HepG2 (cell line): ENCODE measurements at regions of chr2 and their contacts with region 1.

Region 1: GRCh38 chr2:85728883-85729824 is 24.6 kb upstream of the ATOH8 start:
- DNase-seq: peak; percentile 65
- ATAC-seq: peak; percentile 98
- H3K4me3 ChIP-seq: no peak overlapping the region
- H3K27ac ChIP-seq: no peak overlapping the region
- H3K4me1 ChIP-seq: peaks cover 18% of the 10 kb centered on the region; the same call in 1 of the 2 replicates
- H3K27me3 ChIP-seq: peaks cover 5 to 32% of the 10 kb centered on the region in 2 experiments
- CTCF ChIP-seq: peak; percentile 98
- EP300 ChIP-seq: no peak
- POLR2A ChIP-seq: no peak
- RAD21 ChIP-seq: peak; percentile 98

Region 2: GRCh38 chr2:85813982-85814801 is 85.0 kb after region 1 on chr2:
- CTCF ChIA-PET with region 1: interaction called, 106 read pairs
- POLR2A ChIA-PET with region 1: no interaction called
- in situ Hi-C with region 1: loop called (anchors 5 kb)
- intact Hi-C with region 1: loop called (anchors 1 kb)
- DNase-seq: peak; percentile 82
- ATAC-seq: peak; percentile 97
- H3K4me3 ChIP-seq: no peak overlapping the region
- H3K27ac ChIP-seq: no peak overlapping the region
- H3K4me1 ChIP-seq: peaks cover 24% of the 10 kb centered on the region
- H3K27me3 ChIP-seq: peaks cover 0 to 17% of the 10 kb centered on the region in 2 experiments; a peak in 1 of 5 replicates
- CTCF ChIP-seq: peak; percentile 99
- EP300 ChIP-seq: peak in 1 of 2 experiments; percentile 36; a peak in 1 of 4 replicates
- POLR2A ChIP-seq: no peak
- RAD21 ChIP-seq: peak; percentile 99